Right cardiac atrium (tissue), 5 donors: ENCODE measurements at regions of chr17 and their contacts with region 1.

Region 1: DNA sequence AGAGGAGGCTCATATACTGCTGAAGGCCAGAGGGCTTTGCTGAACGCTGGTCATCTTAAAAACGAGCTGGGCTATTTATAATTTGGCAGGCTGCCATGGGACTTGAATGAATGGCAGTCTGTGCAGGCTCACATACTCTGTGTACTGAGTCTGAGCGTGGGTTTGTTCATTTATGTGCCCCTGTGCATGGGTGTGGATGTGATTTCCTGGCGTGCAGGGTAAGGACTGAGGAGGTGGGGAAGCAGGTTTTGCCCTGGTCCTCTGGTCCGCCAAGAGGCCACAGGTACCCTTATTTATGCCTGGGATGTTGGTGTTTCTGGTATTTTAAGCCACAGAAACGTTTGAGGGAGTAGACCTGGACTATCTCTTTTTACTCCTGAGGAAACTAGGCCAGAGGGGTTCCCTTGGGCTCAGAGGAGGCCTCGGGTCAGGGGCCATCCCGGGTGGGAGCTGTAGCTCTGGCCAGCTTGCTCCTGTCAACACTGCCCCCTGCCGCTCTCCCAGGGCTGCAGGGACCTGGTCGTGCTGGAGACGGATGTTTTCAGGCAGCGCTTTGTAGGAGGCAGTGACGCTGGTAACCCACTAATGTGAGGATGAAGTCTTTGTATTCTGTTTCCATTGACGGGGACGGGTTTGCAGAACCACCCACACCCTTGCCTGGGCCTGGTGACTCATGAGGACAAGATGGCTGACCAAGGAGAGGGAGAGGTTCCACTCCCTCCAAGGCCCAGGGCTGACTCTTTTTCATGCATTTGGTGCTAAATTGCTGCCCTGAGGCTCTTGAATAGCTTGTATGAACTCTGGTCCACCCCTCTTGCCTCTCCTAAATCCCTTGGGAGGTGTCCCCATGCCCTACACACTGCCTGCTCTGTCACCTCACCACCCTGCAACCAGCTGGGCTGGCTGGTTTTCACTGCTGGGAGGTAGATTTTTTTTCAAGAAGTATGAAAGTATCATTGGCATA is 184.5 kb downstream of the MSI2 start:
- DNase-seq: peak; percentile 86 to 89 (median 88)
- ATAC-seq: peak; percentile 77 to 94
- H3K4me3 ChIP-seq: no peak overlapping the region
- H3K27ac ChIP-seq: peak overlapping the region; percentile 70
- H3K4me1 ChIP-seq: peaks cover 20% of the 10 kb centered on the region
- H3K27me3 ChIP-seq: no peaks in the 10 kb centered on the region

Region 2: DNA sequence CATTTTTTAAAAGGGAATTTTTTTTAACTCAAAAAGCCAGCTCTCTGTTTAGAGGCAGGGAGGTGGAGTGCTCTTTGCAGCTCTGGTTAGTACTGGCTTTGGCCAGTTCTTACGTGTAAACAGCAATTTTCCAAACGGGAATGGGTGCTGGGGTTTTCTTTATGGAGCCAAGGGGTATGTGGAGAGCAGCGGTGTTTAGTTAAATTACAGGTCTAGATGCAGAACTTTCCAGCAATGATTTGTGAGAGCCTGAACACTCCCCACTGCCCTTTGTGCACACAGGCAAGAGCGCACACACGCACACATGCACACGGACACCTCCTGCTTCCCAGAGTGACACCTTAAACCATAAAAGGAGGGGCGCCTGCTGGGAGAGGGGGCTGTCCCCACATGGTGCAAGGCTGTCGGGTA is 44.3 kb before region 1 on chr17:
- intact Hi-C with region 1: loop called in 1 of 4 experiments (anchors 5 kb)
- DNase-seq: no peak
- ATAC-seq: peak in 1 of 2 donors; percentile 20
- H3K4me3 ChIP-seq: no peak overlapping the region
- H3K27ac ChIP-seq: no peak overlapping the region
- H3K4me1 ChIP-seq: peaks cover 3% of the 10 kb centered on the region
- H3K27me3 ChIP-seq: no peaks in the 10 kb centered on the region